Cardiac septum (tissue), 1 donor: ENCODE measurements at regions of chr19 and their contacts with region 1.

Region 1: DNA sequence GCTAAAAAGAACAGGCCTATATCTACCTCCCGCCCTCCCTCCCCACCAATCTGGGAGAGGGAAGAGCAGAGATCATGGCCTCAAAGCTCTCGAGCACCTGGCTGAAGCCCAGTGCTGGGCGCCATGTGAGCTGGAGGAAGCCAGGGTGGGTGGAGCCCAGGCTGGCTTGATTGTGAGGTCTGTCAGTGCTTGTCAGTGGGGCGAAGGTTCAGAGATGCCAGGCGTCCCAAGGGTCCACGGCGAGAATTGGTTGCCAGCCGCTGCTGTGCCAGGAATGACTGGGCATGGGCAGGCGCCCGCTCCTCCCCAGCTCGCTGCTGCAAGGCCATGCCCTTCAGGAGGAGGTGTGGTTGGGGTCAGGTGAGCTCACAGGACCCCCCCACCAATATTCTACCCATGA is 11.5 kb downstream of the BEST2 start:
- DNase-seq: peak; percentile 88

Region 2: DNA sequence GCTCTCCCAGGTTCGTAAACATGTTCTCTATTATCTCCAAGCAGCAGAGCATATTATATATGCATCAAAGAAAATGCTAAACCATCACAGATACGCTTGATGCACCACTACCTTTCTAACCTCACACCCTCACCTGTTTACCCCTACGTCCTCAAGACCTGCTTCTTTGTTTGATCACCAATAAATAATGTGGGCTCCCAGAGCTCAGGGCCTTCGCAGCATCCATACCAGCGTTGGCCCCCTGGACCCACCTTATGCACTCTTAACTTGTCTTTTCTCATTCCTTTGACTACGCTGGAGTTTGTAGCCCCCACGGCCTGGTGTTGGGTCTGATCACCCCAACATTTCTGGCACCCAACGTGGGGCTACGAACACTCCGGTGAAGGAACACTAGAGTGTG is 312.3 kb before region 1 on chr19:
- intact Hi-C with region 1: no loop called
- DNase-seq: no peak

Region 3: DNA sequence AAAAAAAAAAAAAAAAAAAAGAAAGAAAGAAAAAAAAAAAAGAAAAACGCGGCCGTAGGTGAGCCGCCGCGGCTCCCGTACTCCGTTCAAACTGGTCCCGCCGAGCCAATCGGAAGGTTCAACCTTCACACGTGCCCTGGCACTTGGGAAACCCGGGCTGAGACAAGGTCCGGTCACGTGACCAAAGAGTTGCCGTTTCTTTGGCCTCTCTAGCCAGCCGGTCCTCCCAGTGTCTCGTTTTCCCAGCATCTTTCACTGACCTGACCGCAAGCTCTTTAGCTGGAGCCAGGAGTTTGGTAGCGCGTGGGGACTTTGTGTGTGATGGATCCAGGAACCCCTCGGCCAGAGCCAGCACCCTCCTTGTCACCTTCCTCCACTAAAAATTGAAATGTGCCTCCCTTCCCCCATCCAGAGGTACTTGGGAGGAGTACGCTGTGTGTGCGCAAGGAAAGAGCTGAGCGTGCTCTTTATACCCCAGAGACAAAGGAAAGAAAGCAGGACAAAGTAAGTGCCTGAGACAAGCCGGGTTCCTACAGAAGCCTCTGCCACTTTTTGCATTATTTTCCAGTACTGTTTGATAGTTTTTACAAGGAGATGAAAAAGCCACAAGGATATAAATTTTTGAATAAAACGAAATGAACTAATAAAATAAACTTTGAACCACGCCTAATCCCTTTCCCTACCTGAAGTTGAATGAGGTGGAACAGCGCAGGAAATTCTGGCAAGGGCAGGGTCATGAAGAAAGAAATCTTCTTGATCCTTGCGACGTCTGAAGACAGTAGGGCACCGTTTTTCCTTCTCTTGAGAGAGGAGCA is 40.3 kb before region 1 on chr19:
- intact Hi-C with region 1: loop called (anchors 5 kb)
- DNase-seq: peak; percentile 98

Region 4: DNA sequence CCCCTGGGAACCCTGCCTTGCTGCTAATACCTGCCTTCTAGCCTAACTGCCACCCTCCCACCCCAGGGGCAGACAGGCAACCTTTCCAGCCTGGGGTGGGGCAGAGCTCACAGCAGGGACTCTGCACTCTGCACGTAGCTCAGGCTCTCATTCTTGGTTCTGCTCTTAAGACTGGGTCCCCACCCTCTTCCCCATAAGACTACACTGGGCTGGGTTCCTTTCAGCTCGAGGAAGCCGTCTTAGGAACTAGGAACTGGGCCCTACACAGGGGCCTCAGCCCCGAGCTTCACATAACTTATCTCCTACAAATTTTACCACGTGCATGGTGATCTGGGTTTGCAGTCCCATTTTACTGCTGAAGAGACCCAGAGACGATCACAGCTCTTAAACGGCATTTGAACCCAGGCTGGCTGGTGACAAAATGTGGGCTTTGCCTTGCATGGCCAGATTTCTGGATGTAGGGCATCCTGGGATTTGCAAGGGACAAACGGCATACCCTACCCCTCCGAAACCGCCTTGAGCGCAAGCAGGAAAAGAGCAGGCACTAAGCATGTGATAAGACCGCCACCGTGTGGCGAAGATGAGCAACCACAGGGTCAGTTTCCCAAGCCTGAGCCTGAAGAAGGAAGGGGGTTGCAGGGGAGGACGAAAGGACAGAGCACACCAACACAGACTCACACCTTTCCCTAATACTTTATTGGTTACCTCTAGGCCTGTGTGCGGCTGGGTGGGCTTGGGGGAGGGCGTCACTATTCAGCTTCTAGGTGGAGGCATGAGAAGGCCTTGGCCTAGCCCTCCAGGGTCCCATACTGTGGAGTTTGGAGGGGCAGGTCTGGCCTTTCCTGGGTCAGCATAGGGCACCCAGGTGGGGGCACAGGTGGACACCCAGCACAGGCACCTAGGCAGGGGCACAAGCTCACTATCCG is 33.3 kb after region 1 on chr19:
- intact Hi-C with region 1: loop called (anchors 5 kb)
- DNase-seq: peak; percentile 94

Region 5: DNA sequence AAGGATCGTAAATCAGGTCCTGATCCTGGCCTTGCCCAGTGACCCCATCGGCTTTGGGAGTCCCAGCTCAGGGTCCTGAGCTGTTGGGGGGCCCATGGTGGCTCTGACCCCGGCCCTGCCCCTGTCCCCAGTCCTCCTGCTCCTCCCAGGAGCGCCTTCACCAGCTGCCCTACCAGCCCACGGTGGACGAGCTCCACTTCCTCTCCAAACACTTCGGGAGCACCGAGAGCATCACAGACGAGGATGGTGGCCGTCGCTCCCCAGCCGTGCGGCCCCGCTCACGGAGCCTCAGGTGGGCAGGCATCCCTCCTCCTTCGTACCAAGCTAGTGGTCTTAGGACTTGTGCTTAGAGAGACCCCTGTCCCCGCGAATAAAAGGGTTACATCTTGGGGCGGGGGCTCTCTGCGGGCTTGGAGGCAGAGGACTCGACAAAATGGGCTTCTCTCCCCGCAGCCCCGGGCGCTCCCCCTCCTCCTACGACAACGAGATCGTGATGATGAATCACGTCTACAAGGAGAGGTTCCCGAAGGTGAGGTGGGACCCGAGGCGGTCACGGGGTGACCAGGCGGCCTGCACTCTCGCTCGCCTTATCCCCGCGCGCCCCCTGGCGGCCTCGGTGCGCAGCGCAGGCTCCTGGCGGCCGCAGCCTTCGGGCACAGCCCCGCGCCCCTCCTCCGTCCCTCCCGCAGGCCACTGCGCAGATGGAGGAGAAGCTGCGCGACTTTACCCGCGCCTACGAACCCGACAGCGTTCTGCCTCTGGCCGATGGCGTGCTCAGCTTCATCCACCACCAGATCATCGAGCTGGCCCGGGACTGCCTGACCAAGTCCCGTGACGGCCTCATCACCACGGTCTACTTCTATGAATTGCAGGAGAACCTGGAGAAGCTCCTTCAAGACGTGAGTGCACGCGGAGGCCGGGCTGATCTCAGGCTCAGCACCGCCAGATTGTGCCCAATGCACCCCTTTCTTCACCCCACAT is 84.3 kb after region 1 on chr19:
- intact Hi-C with region 1: loop called (anchors 5 kb)
- DNase-seq: peak; percentile 93